PC-3 (cell line): ENCODE measurements at regions of chr12 and their contacts with region 1.

Region 1: GRCh38 chr12:78406828-78407227 is 457.7 kb upstream of the SYT1 start:
- DNase-seq: no peak
- ATAC-seq: peak; percentile 6
- H3K4me3 ChIP-seq: no peak overlapping the region
- H3K27ac ChIP-seq: peak overlapping the region; percentile 17
- H3K4me1 ChIP-seq: peaks cover 39% of the 10 kb centered on the region
- H3K27me3 ChIP-seq: no peaks in the 10 kb centered on the region
- CTCF ChIP-seq: no peak

Region 2: GRCh38 chr12:78442454-78442801 is 35.6 kb after region 1 on chr12:
- CTCF ChIA-PET with region 1: no interaction called
- POLR2A ChIA-PET with region 1: no interaction called
- intact Hi-C with region 1: loop called (anchors 2 kb)
- DNase-seq: peak; percentile 19
- ATAC-seq: peak; percentile 29
- H3K4me3 ChIP-seq: peak overlapping the region; percentile 26; the same call in 1 of the 2 replicates
- H3K27ac ChIP-seq: peak overlapping the region; percentile 75
- H3K4me1 ChIP-seq: peaks cover 37% of the 10 kb centered on the region
- H3K27me3 ChIP-seq: no peaks in the 10 kb centered on the region
- CTCF ChIP-seq: no peak